ENCODE measurements at regions of chr13 and their contacts with region 1.

Region 1: DNA sequence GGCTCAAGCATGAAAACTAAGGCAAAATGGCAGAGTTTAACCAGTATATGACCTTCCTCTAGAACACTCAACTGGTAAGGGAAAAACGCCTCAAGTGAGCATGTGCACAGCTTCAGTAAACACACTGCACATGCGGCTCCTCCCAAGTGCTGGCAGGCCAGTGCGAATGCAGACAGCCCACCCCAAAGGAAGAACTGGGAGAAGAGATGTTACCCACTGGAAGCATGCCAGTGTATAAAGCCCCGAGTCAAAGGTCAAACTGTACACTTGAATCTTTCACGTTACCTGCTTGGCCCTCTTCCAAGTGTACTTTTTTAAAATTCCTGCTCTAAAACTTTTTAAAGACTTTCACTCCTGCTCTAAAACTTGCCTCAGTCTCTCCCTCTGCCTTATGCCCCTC is 19.2 kb upstream of the RCBTB1 start:
- DNase-seq: no peak
- ATAC-seq: no peak
- H3K4me3 ChIP-seq: no peak overlapping the region
- H3K27ac ChIP-seq: no peak overlapping the region
- H3K4me1 ChIP-seq: no peaks in the 10 kb centered on the region
- H3K27me3 ChIP-seq: no peaks in the 10 kb centered on the region
- CTCF ChIP-seq: no peak
- POLR2A ChIP-seq: no peak

Region 2: GRCh38 chr13:48902368-48902767 is 702.2 kb before region 1 on chr13:
- intact Hi-C with region 1: no loop called
- DNase-seq: peak in 2 of 3 donors; percentile 45 to 82
- ATAC-seq: peak in 3 of 4 donors; percentile 76 to 93 (median 83)
- H3K4me3 ChIP-seq: no peak overlapping the region
- H3K27ac ChIP-seq: no peak overlapping the region
- H3K4me1 ChIP-seq: no peaks in the 10 kb centered on the region
- H3K27me3 ChIP-seq: no peaks in the 10 kb centered on the region
- CTCF ChIP-seq: no peak
- POLR2A ChIP-seq: no peak

Region 3: DNA sequence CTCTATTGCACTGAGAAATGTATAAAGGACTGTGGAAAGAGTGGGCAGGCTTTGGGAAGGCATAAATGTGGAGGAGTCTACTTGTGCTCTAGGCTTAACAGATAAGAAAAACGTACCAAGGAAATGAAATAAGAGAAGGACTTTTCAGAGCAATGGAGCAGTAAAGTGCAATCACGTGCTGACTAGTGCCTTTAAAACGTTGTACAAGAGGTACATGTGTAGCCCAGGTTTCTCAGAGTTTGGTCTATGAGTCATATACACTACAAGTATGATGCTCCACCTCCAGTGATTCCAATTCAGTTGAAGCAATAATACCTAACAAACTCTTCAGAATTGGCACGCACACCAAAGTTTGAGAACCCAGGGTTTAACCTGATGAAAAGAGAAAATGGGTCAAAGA is 642.3 kb before region 1 on chr13:
- intact Hi-C with region 1: no loop called
- DNase-seq: no peak
- ATAC-seq: no peak
- H3K4me3 ChIP-seq: no peak overlapping the region
- H3K27ac ChIP-seq: no peak overlapping the region
- H3K4me1 ChIP-seq: no peaks in the 10 kb centered on the region
- H3K27me3 ChIP-seq: no peaks in the 10 kb centered on the region
- CTCF ChIP-seq: no peak
- POLR2A ChIP-seq: no peak

Region 4: DNA sequence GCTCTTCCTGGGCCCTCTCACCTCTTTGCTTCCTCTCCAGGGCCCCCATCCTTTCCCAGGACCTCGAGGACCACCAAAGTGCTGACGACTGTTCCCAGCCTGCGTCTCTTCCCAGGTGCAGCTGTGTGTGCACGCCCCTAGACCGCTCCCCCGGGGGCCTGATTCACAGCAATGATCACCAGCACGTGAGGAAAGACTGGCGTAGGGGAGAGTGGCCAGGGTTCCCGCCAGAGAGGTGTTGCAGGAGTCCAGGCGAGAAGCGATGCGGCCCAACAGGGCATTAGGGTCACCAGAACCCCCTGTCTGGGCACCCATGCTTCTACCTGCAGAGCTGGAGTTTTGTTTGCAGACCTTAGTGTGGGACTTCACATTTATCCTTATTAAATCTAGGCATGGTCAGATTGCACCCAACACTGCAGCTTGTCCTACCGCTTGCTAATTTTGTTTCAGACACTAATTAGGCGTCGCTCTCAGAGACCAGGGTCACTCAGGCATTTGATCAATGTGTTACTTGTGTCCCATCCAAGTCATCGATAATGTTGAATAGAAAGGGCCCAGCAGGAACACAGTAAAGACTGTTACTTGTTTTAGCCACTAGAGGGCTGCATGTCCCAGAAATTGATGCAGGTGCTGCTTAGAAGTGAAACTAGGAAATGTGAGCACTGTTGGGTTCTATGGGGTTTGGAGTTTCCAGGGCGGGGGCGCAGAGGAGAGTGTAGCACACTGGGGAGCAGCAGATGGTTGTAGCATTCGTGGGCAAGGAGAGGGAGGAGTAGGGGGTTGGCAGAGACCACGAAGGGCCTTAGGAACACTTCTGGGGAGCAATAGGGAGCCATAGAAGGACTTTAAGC is 303.6 kb before region 1 on chr13:
- intact Hi-C with region 1: loop called in 1 of 2 experiments (anchors 5 kb)
- DNase-seq: peak in 1 of 3 donors; percentile 60
- ATAC-seq: peak; percentile 85 to 93 (median 90)
- H3K4me3 ChIP-seq: peak overlapping the region in 2 of 3 donors; percentile 19 to 40
- H3K27ac ChIP-seq: no peak overlapping the region
- H3K4me1 ChIP-seq: no peaks in the 10 kb centered on the region
- H3K27me3 ChIP-seq: no peaks in the 10 kb centered on the region
- CTCF ChIP-seq: peak; percentile 79 to 96 (median 80)
- POLR2A ChIP-seq: no peak

Region 5: GRCh38 chr13:49749848-49750247 is 145.3 kb after region 1 on chr13:
- intact Hi-C with region 1: no loop called
- DNase-seq: no peak
- ATAC-seq: no peak
- H3K4me3 ChIP-seq: no peak overlapping the region
- H3K27ac ChIP-seq: no peak overlapping the region
- H3K4me1 ChIP-seq: peaks cover 0 to 13% (median 6%) of the 10 kb centered on the region in 4 donors
- H3K27me3 ChIP-seq: no peaks in the 10 kb centered on the region
- CTCF ChIP-seq: no peak
- POLR2A ChIP-seq: no peak

Region 6: GRCh38 chr13:50437252-50437651 is 832.7 kb after region 1 on chr13:
- intact Hi-C with region 1: no loop called
- DNase-seq: no peak
- ATAC-seq: no peak
- H3K4me3 ChIP-seq: no peak overlapping the region
- H3K27ac ChIP-seq: no peak overlapping the region
- H3K4me1 ChIP-seq: no peaks in the 10 kb centered on the region
- H3K27me3 ChIP-seq: no peaks in the 10 kb centered on the region
- CTCF ChIP-seq: no peak
- POLR2A ChIP-seq: no peak

Measured in right lobe of liver (tissue), 6 donors.